ENCODE measurements at regions of chr15 and their contacts with region 1.

Region 1: GRCh38 chr15:84716036-84716799 is at the start of gene SEC11A:
- DNase-seq: peak; percentile 95
- ATAC-seq: peak; percentile 95
- H3K4me3 ChIP-seq: peak within 1 kb of the TSS; percentile 87 to 94 (median 90)
- H3K27ac ChIP-seq: peak within 1 kb of the TSS; percentile 95 to 97 (median 96)
- H3K4me1 ChIP-seq: peaks cover 29 to 30% of the 10 kb centered on the region in 2 donors
- H3K27me3 ChIP-seq: no peaks in the 10 kb centered on the region
- CTCF ChIP-seq: no peak
- POLR2A ChIP-seq: peak; percentile 72 to 80
- total RNA-seq, gene SEC11A: 90.2 to 127 (median 118) TPM

Region 2: GRCh38 chr15:84783496-84784251 is 67.5 kb after region 1 on chr15:
- in situ Hi-C with region 1: no loop called
- intact Hi-C with region 1: loop called (anchors 5 kb)
- DNase-seq: no peak
- ATAC-seq: no peak
- H3K4me3 ChIP-seq: no peak overlapping the region
- H3K27ac ChIP-seq: peak overlapping the region; percentile 77 to 95 (median 82)
- H3K4me1 ChIP-seq: peaks cover 49 to 51% of the 10 kb centered on the region in 2 donors
- H3K27me3 ChIP-seq: no peaks in the 10 kb centered on the region
- CTCF ChIP-seq: no peak
- POLR2A ChIP-seq: no peak

Region 3: GRCh38 chr15:85137489-85138168 is 421.4 kb after region 1 on chr15:
- in situ Hi-C with region 1: no loop called
- intact Hi-C with region 1: no loop called
- DNase-seq: no peak
- ATAC-seq: no peak
- H3K4me3 ChIP-seq: no peak overlapping the region
- H3K27ac ChIP-seq: no peak overlapping the region
- H3K4me1 ChIP-seq: no peaks in the 10 kb centered on the region
- H3K27me3 ChIP-seq: no peaks in the 10 kb centered on the region
- CTCF ChIP-seq: no peak
- POLR2A ChIP-seq: no peak

Measured in gastrocnemius medialis (tissue), 4 donors.